GM12878 (cell line): ENCODE measurements at regions of chr12 and their contacts with region 1.

Region 1: DNA sequence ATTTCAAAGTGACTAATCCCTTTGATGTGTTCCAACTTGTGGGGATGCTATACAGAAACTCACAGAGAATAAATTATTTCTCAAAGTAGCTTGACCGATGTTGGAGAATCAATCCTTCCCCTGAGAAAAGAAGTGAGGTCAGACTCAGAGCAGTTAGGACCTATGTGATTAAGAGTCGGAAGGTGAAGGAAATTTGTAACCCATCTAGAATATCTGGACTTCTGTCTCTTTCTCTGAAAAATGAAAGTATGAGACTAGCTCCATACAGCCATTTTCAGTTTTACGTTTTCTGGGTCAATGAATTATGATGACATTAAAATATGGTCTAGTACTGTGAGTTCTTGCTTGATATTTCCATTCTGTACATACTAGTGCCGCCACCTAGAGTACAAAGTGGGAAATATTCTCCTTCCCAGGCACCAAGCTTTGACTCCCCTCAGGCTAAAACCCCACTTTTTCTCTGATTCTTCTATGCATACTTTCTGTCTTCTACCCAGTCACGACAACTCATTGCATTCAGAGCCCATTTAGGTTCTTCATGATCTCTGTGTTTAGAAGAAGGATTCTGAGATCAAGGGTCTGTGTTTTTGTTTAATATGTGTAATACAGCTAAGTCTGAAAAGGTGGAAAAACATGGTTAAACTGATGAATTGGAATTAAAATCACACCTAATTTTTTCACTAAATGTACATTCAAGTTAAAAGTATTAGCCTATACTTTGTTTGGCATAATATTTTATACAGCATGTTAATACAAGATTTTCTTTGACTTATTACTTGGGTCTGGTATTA is 6.9 kb upstream of the NTS start:
- DNase-seq: no peak
- ATAC-seq: peak; percentile 92
- H3K4me3 ChIP-seq: no peak overlapping the region
- H3K27ac ChIP-seq: no peak overlapping the region
- H3K4me1 ChIP-seq: no peaks in the 10 kb centered on the region
- H3K27me3 ChIP-seq: no peaks in the 10 kb centered on the region
- CTCF ChIP-seq: peak; percentile 68 to 76 (median 69)
- EP300 ChIP-seq: no peak
- POLR2A ChIP-seq: no peak
- RAD21 ChIP-seq: peak; percentile 75

Region 2: GRCh38 chr12:84315926-84316325 is 1551.3 kb before region 1 on chr12:
- CTCF ChIA-PET with region 1: no interaction called
- POLR2A ChIA-PET with region 1: no interaction called
- RAD21 ChIA-PET with region 1: no interaction called
- SMC1A ChIA-PET with region 1: no interaction called
- in situ Hi-C with region 1: no loop called
- intact Hi-C with region 1: no loop called
- DNase-seq: no peak
- ATAC-seq: no peak
- H3K4me3 ChIP-seq: no peak overlapping the region
- H3K27ac ChIP-seq: no peak overlapping the region
- H3K4me1 ChIP-seq: no peaks in the 10 kb centered on the region
- H3K27me3 ChIP-seq: no peaks in the 10 kb centered on the region
- CTCF ChIP-seq: no peak
- EP300 ChIP-seq: no peak
- POLR2A ChIP-seq: no peak
- RAD21 ChIP-seq: no peak

Region 3: DNA sequence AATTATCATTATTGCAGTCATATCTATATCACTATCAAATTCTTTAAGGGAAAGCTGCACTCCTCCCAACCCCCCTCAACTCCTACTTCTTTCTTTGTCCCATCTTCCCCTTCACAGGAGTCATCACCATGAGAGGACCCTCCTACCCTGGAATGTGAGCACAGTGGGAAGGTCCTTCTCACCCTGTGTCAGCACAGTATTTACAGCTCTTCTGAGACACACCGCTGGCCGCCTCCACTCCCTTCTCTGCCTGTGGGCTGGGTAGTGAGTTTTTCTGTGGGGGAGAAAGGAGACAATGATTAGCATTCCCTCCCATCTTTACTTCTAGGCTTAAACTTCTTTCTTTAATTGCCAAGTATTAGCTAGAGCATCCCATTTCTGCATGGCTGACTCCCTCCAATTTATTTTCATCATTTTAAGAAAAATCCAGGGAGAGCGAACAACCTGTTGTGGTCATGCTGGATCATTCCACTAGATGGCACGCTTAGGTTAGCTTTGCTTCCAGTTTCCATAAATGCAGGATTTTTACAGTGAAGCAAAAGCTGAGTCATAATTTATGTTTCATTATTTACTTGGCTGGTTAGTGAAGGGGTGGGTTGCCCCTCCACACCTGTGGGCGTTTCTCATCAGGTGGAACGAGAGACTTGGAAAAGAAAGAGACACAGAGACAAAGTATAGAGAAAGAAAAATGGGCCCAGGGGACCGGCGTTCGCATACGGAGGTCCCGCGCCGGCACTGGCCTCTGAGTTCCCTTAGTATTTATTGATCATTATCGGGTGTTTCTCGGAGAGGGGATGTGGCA is 398.6 kb before region 1 on chr12:
- CTCF ChIA-PET with region 1: interaction called, 44 read pairs
- POLR2A ChIA-PET with region 1: no interaction called
- RAD21 ChIA-PET with region 1: interaction called, 27 read pairs
- SMC1A ChIA-PET with region 1: interaction called, 24 read pairs
- in situ Hi-C with region 1: loop called (anchors 5 kb)
- intact Hi-C with region 1: loop called (anchors 1 kb)
- DNase-seq: peak; percentile 23
- ATAC-seq: peak; percentile 95
- H3K4me3 ChIP-seq: peak overlapping the region; percentile 31; the same call in 1 of the 2 replicates
- H3K27ac ChIP-seq: no peak overlapping the region
- H3K4me1 ChIP-seq: 0 out of 2 replicates have a peak, but pooled peaks cover 2% of the 10 kb centered on the region
- H3K27me3 ChIP-seq: no peaks in the 10 kb centered on the region
- CTCF ChIP-seq: peak; percentile 69 to 86 (median 79)
- EP300 ChIP-seq: no peak
- POLR2A ChIP-seq: no peak
- RAD21 ChIP-seq: peak; percentile 98

Region 4: DNA sequence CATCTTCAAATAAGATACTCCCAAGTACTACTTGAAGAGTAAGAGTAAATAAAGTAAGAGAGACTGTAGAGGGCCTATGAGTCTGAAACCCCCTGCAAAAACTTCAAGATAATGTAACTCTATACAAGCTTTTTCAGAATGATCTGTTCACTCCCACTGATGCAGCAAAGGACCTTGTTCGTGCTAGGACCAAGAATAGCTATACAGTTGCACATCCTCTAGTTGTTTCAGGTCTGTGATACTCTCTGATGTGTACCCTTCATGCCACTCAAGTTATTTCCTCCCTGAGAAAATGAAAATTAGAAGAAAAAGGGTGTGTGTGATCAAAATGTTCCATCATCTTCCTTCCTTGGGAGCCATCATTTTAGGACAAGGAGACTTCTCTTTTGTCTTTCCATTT is 382.8 kb before region 1 on chr12:
- CTCF ChIA-PET with region 1: interaction called, 10 read pairs
- POLR2A ChIA-PET with region 1: no interaction called
- RAD21 ChIA-PET with region 1: no interaction called
- SMC1A ChIA-PET with region 1: interaction called, 4 read pairs
- in situ Hi-C with region 1: no loop called
- intact Hi-C with region 1: no loop called
- DNase-seq: no peak
- ATAC-seq: peak; percentile 56
- H3K4me3 ChIP-seq: no peak overlapping the region
- H3K27ac ChIP-seq: no peak overlapping the region
- H3K4me1 ChIP-seq: no peaks in the 10 kb centered on the region
- H3K27me3 ChIP-seq: no peaks in the 10 kb centered on the region
- CTCF ChIP-seq: no peak
- EP300 ChIP-seq: no peak
- POLR2A ChIP-seq: no peak
- RAD21 ChIP-seq: no peak

Region 5: DNA sequence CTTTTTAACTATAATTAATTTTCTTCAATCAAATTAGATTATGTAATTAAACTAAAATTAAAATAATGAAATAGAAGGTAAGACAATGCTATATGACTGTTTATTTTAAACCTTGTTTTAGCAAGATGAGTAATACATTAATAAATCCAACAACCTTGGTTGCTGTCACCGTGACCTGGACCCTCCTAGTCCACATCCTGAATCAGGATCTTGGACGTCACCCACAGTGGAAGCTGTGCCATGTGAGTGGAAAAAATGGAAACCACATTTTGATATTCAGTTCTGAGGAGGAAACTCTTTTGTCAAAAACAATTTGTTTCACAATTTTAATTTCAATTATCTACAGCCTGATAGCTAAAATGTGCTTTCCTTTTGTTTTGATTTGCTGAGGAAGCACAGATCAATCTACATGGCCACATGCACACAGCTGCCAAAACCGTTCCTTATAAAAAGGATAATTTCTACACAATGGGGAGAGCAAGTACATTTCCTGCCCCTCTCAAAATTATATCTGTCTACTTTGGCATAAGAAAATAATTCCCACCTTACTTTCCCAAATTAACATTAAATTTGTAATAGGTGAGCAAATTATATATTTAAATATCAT is 286.5 kb before region 1 on chr12:
- CTCF ChIA-PET with region 1: interaction called, 58 read pairs
- POLR2A ChIA-PET with region 1: no interaction called
- RAD21 ChIA-PET with region 1: interaction called, 27 read pairs
- SMC1A ChIA-PET with region 1: interaction called, 40 read pairs
- in situ Hi-C with region 1: loop called (anchors 5 kb)
- intact Hi-C with region 1: loop called (anchors 1 kb)
- DNase-seq: no peak
- ATAC-seq: no peak
- H3K4me3 ChIP-seq: no peak overlapping the region
- H3K27ac ChIP-seq: no peak overlapping the region
- H3K4me1 ChIP-seq: no peaks in the 10 kb centered on the region
- H3K27me3 ChIP-seq: no peaks in the 10 kb centered on the region
- CTCF ChIP-seq: no peak
- EP300 ChIP-seq: no peak
- POLR2A ChIP-seq: no peak
- RAD21 ChIP-seq: no peak

Region 6: GRCh38 chr12:85883763-85884162 is 16.6 kb after region 1 on chr12:
- CTCF ChIA-PET with region 1: interaction called, 15 read pairs
- POLR2A ChIA-PET with region 1: no interaction called
- RAD21 ChIA-PET with region 1: no interaction called
- SMC1A ChIA-PET with region 1: interaction called, 3 read pairs
- in situ Hi-C with region 1: no loop called
- intact Hi-C with region 1: no loop called
- DNase-seq: no peak
- ATAC-seq: no peak
- H3K4me3 ChIP-seq: no peak overlapping the region
- H3K27ac ChIP-seq: no peak overlapping the region
- H3K4me1 ChIP-seq: no peaks in the 10 kb centered on the region
- H3K27me3 ChIP-seq: no peaks in the 10 kb centered on the region
- CTCF ChIP-seq: no peak
- EP300 ChIP-seq: no peak
- POLR2A ChIP-seq: no peak
- RAD21 ChIP-seq: no peak

Region 7: DNA sequence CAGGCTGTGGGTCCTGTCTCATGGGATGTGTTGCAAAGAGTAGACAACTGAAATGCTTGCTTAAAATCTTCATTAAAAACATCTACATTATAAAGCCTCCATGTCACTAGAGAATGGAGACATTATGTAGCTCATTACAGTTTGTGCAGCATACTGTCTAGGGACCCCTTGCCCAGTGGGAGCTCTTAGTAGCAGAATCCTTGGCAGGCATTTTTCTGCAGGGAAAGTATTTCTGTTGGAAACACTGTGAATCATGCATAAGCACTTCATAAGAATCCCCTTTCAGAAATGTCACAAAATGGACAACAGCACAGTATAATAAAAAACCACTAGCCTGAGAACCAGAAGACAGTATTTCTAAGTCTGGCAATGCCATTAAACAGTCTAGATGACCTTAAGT is 214.7 kb after region 1 on chr12:
- CTCF ChIA-PET with region 1: no interaction called
- POLR2A ChIA-PET with region 1: no interaction called
- RAD21 ChIA-PET with region 1: no interaction called
- SMC1A ChIA-PET with region 1: no interaction called
- in situ Hi-C with region 1: no loop called
- intact Hi-C with region 1: no loop called
- DNase-seq: no peak
- ATAC-seq: no peak
- H3K4me3 ChIP-seq: no peak overlapping the region
- H3K27ac ChIP-seq: no peak overlapping the region
- H3K4me1 ChIP-seq: no peaks in the 10 kb centered on the region
- H3K27me3 ChIP-seq: no peaks in the 10 kb centered on the region
- CTCF ChIP-seq: no peak
- EP300 ChIP-seq: no peak
- POLR2A ChIP-seq: no peak
- RAD21 ChIP-seq: no peak

Region 8: GRCh38 chr12:86117711-86118110 is 250.5 kb after region 1 on chr12:
- CTCF ChIA-PET with region 1: no interaction called
- POLR2A ChIA-PET with region 1: no interaction called
- RAD21 ChIA-PET with region 1: no interaction called
- SMC1A ChIA-PET with region 1: no interaction called
- in situ Hi-C with region 1: no loop called
- intact Hi-C with region 1: no loop called
- DNase-seq: no peak
- ATAC-seq: no peak
- H3K4me3 ChIP-seq: no peak overlapping the region
- H3K27ac ChIP-seq: no peak overlapping the region
- H3K4me1 ChIP-seq: no peaks in the 10 kb centered on the region
- H3K27me3 ChIP-seq: no peaks in the 10 kb centered on the region
- CTCF ChIP-seq: no peak
- EP300 ChIP-seq: no peak
- POLR2A ChIP-seq: no peak
- RAD21 ChIP-seq: no peak